Stomach (tissue), 19 donors: ENCODE measurements at regions of chr1 and their contacts with region 1.

Region 1: DNA sequence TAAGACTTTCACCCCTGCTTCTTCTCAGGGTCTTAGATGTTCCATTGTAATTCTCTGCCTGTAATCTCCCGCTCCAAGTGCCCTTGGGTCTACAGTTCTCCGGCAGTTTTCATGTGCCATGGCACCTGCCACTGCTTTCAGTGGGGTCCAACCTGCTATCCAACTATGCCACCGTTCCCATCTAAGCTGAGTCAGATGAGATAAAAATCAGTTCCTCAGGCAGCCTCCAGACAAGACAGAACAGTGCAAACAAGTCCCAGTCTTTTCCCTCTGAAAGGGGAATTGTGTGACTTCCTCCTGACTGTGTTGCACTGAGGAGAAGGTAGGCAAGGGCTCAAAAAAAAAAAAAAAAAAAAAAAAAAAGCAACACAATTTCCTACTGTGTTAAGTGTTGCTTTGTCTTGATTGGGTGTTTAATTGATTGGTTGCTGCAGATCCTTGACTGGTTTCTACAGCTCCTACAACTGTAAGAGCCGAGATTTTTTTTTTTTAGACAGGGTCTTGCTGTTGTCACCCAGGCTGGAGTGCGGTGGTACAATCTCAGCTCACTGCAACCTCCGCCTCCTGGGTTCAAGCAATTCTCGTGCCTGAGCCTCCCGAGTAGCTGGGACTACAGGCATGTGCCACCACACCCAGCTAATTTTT is 50.7 kb downstream of the EBNA1BP2 start:
- DNase-seq: no peak
- H3K4me3 ChIP-seq: no peak overlapping the region
- H3K27ac ChIP-seq: no peak overlapping the region
- H3K4me1 ChIP-seq: no peaks in the 10 kb centered on the region
- H3K27me3 ChIP-seq: peaks cover 0 to 13% (median 0%) of the 10 kb centered on the region in 3 donors
- CTCF ChIP-seq: no peak
- EP300 ChIP-seq: no peak
- POLR2A ChIP-seq: no peak

Region 2: DNA sequence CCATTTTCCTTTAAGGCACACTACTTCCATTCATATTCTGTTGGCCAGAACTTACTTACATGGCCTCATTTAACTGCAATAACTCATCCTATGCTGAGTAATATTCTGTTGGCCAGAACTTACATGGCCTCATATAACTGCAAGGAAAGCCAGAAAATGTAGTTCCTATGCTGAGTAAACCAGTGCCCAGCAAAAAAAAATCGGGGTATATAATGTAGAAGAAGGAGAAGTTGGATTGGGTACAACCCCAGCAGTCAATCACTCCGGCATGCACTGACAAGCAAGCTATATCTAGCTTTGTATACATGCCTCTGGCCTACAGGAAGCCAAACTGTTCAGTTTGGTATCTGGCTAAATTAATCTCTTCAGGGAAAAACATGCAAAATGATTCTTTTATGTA is 502.5 kb before region 1 on chr1:
- intact Hi-C with region 1: loop called (anchors 10 kb)
- DNase-seq: peak in 1 of 2 donors; percentile 36
- H3K4me3 ChIP-seq: no peak overlapping the region
- H3K27ac ChIP-seq: no peak overlapping the region
- H3K4me1 ChIP-seq: peaks cover 0 to 4% (median 0%) of the 10 kb centered on the region in 4 donors
- H3K27me3 ChIP-seq: no peaks in the 10 kb centered on the region
- CTCF ChIP-seq: no peak
- EP300 ChIP-seq: no peak
- POLR2A ChIP-seq: no peak

Region 3: DNA sequence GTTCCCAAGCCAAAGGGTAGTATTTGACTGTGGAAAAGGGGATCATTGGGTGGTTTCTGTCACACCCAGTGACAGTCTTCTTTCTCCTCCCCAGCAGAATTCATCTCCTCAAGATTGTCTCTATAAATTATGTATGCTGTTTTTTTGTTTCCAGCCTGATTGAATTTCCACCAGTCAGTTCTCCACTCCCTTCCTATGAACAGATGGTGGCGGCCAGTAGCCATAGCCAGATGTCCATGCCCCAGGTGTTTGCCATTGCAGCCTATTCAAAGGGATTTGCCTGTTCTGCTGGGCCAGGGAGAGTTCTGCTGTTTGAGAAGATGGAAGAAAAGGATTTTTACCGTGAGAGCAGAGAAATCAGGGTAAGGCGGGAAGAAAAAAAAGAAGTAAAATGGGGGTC is 63.6 kb after region 1 on chr1:
- intact Hi-C with region 1: no loop called
- DNase-seq: no peak
- H3K4me3 ChIP-seq: no peak overlapping the region
- H3K27ac ChIP-seq: no peak overlapping the region
- H3K4me1 ChIP-seq: no peaks in the 10 kb centered on the region
- H3K27me3 ChIP-seq: no peaks in the 10 kb centered on the region
- CTCF ChIP-seq: no peak
- EP300 ChIP-seq: no peak
- POLR2A ChIP-seq: no peak